Sigmoid colon (tissue), 7 donors: ENCODE measurements at regions of chr17 and their contacts with region 1.

Region 1: GRCh38 chr17:7856883-7857723 is at the start of gene NAA38:
- DNase-seq: peak; percentile 99
- H3K4me3 ChIP-seq: peak within 1 kb of the TSS; percentile 46 to 76 (median 63)
- H3K27ac ChIP-seq: peak within 1 kb of the TSS; percentile 90 to 94 (median 93)
- H3K4me1 ChIP-seq: peaks cover 0 to 43% (median 38%) of the 10 kb centered on the region in 4 donors
- H3K27me3 ChIP-seq: no peaks in the 10 kb centered on the region
- CTCF ChIP-seq: peak in 2 of 4 experiments; percentile 30 to 31
- EP300 ChIP-seq: peak in 1 of 4 donors; percentile 8
- POLR2A ChIP-seq: peak; percentile 31 to 41
- total RNA-seq, gene NAA38: 92.4 to 206 (median 106) TPM

Region 2: GRCh38 chr17:7583253-7584109 is 273.6 kb before region 1 on chr17 and contains the start of gene MPDU1:
- intact Hi-C with region 1: loop called (anchors 10 kb)
- DNase-seq: peak; percentile 99
- H3K4me3 ChIP-seq: peak within 1 kb of the TSS; percentile 39 to 63 (median 56)
- H3K27ac ChIP-seq: peak within 1 kb of the TSS; percentile 91 to 92 (median 92)
- H3K4me1 ChIP-seq: peaks cover 0 to 76% (median 64%) of the 10 kb centered on the region in 4 donors
- H3K27me3 ChIP-seq: no peaks in the 10 kb centered on the region
- CTCF ChIP-seq: no peak
- EP300 ChIP-seq: peak in 1 of 4 donors; percentile 41
- POLR2A ChIP-seq: peak in 1 of 2 donors; percentile 25
- total RNA-seq, gene MPDU1: 38.5 to 67.1 (median 50.8) TPM

Region 3: DNA sequence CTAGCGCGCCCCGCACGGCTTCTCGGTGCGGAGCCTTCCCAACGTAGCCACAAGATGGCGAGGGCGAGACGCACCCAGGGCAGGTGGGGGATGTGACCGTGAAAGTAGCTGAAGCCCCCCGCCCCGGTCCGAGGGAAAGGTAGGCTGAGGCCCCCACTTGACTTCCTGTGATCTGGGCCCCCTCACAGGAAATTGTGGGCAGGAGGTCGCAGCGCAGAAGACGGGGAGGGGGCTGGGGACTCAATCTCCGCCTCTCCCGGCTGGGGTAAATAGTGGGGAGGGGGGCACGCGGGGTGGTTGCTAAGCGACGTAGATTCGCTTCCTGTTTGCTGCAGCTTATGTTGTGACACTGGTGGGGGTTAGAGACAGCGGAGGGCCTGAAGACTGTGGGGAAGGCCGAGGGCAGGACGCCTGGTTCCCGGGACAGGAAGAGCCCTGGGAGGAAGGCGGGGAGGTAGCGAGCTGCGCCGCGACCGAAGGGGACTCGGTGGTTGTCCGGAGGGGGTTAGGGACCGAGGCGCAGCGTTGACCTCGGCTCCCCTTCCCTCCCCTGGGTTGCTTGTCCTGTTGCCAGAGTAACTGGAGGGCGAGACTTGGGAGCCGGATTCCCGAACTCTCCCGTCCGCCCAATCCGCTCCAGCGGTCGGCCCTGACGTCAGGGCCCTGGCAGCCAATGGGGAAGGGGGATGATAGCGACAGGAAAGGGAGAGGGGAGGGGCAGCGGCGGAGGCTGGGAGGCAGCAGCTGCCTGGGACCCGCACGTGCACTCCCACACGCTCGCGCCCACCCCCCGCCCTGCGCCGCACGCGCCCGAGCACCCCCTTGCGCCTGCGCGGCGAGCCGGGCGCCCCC is 21.9 kb before region 1 on chr17:
- intact Hi-C with region 1: loop called (anchors 1 kb)
- DNase-seq: peak; percentile 99
- H3K4me3 ChIP-seq: peak overlapping the region; percentile 75 to 96 (median 82)
- H3K27ac ChIP-seq: peak overlapping the region; percentile 95 to 100 (median 97)
- H3K4me1 ChIP-seq: peaks cover 0 to 53% (median 44%) of the 10 kb centered on the region in 4 donors
- H3K27me3 ChIP-seq: no peaks in the 10 kb centered on the region
- CTCF ChIP-seq: peak; percentile 88 to 94 (median 90)
- EP300 ChIP-seq: peak in 1 of 4 donors; percentile 65
- POLR2A ChIP-seq: peak; percentile 86

Region 4: DNA sequence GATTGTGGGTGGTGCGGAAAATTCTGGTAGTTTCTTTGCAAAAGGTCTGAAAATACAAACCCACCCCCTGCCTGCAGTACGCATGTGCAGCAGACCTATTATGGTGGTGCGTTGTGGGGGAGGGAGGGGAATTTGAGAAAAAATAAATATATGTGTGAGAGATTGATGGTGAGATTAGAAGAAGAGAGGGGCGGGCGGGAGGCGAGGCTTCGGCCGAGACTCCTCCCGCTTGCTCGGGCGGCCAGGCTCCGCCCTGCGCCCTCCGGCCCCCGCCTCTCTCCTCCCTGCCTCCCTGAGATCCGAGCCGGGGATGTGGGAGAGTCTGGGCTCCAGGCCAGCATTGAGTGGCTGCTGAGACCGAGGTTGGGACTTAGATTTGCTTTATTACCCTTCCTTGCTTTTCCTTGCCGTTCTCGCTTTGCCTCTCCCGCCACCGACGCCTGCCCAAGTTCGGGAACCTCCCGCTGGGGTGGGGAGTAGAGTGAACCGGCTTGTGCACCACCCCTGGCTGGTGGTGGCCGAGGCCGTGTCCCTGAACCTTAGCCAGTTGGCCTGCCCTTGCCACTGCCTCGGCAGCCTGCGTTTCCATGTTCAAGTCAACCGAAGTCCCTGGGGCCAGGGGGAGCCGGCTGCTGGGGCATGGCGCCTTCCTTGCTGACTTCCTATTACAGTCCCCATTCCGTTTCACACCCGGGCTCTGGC is 30.5 kb after region 1 on chr17:
- intact Hi-C with region 1: loop called (anchors 2 kb)
- DNase-seq: peak; percentile 98
- H3K4me3 ChIP-seq: peak overlapping the region in 3 of 4 donors; percentile 89 to 94 (median 89)
- H3K27ac ChIP-seq: peak overlapping the region; percentile 93 to 98 (median 95)
- H3K4me1 ChIP-seq: peaks cover 0 to 69% (median 56%) of the 10 kb centered on the region in 4 donors
- H3K27me3 ChIP-seq: no peaks in the 10 kb centered on the region
- CTCF ChIP-seq: no peak
- EP300 ChIP-seq: no peak
- POLR2A ChIP-seq: peak in 1 of 2 donors; percentile 51

Region 5: DNA sequence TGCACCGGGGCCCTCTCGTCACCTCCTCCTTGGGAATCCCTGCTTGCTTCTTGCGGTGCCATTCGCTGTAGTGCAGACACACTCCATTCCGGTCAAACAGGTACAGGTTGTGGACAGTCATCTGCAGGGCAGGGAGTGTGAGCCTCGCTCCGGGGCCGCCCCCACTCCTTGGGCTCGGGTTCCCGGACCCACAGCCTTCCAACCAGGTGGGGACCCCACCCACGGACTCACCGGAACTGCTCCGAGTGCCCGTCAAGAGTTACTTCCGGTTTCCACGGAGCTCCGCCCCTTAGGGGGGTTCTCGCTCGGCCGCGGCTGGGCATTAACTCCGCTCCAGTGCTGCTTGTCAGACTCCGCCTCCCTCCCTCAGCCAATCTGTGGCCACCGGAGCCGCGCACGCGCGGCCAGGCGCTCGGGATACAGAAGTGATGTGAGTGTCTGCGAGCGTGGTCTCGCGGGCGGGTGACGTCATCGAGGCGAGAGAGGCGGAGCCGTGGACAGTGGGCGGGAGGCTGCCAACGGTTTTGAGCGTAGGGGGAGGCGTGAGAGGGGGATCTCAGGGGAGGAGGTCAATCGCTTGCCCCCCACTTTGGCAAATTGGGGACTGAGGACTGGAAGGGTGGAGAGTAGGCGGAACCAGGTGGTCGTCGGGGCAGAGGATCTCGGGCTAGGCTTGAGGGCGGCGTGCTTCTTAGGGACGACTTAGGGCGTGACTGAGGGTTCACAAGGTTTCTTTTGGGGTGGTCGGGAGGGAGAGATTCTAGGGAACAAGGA is 74.8 kb after region 1 on chr17 and contains the starts of genes CNTROB and TRAPPC1:
- intact Hi-C with region 1: loop called (anchors 5 kb)
- DNase-seq: peak; percentile 100
- H3K4me3 ChIP-seq: peak within 1 kb of the TSS; percentile 67 to 74 (median 72)
- H3K27ac ChIP-seq: peak within 1 kb of the TSS; percentile 83 to 87 (median 84)
- H3K4me1 ChIP-seq: peaks cover 0 to 61% (median 42%) of the 10 kb centered on the region in 4 donors
- H3K27me3 ChIP-seq: peaks cover 0 to 20% (median 9%) of the 10 kb centered on the region in 3 donors
- CTCF ChIP-seq: no peak
- EP300 ChIP-seq: no peak
- POLR2A ChIP-seq: peak; percentile 76 to 79
- total RNA-seq, gene CNTROB: 11.8 to 40.4 (median 30.0) TPM
- total RNA-seq, gene TRAPPC1: 33.5 to 66.5 (median 45.7) TPM